MCF 10A (cell line): ENCODE measurements at regions of chr10 and their contacts with region 1.

Region 1: DNA sequence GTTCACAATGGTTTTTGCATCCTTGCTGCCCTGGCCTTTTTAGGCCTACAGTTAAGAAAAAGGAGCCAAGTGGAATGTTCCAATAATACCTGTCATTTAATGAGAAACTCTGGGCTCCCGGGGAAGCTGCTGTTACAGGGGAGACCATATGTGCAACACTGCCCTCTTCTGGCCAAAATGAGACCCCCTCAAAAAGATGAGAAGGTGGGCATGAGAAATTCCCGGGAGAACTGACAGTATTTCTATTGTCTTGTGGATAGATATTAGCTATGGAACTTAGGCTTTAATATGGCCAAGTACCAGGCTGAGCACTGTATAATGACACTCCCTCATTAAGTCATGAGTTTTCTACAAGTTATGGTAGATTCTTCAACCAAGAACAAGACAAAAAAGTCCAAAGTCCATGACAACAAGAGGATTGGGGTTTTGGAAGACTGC is 99.4 kb downstream of the CCDC3 start:
- DNase-seq: peak; percentile 77
- H3K4me3 Mint-ChIP-seq: no peak overlapping the region
- H3K27ac Mint-ChIP-seq: no peak overlapping the region
- H3K4me1 Mint-ChIP-seq: peaks cover 4% of the 10 kb centered on the region
- H3K27me3 Mint-ChIP-seq: no peaks in the 10 kb centered on the region
- CTCF ChIP-seq: peak; percentile 86

Region 2: DNA sequence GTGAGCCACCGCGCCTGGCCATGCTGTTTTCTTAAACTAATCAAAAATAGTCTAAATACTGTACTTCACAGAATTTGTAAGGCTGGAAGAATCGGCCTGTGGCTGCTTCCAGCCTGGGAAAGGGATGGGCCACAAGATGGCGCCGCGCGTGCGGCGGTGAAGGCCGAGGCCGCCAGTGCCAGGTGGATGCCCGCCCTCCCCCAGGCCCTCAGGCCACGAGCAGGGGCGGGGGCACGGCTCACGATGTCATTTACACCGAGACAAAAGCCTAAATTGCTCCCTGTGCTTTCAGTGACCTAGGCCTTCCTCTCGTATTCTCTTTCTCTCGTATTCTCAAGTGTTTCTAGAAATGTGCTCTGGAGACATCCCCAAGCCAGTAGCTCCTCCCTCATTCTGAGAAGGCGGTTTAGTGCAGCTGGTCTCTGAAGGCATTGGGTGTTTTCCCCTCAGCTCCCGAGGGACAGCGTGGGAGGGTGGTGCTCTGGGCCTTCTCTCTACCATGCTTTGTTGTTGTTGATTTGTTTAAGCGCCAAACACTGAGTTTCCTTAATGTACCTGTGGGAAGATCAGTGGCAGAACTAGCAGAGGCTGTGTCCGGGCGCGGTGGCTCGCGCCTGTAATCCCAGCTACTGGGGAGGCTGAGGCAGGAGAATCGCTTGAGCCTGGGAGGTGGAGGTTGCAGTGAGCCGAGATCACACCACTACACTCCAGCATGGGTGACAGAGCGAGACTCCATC is 637.8 kb before region 1 on chr10:
- CTCF ChIA-PET with region 1: interaction called, 6 read pairs
- POLR2A ChIA-PET with region 1: no interaction called
- intact Hi-C with region 1: loop called (anchors 1 kb)
- DNase-seq: peak; percentile 62
- H3K4me3 Mint-ChIP-seq: peak overlapping the region; percentile 62
- H3K27ac Mint-ChIP-seq: peak overlapping the region; percentile 40
- H3K4me1 Mint-ChIP-seq: peaks cover 8% of the 10 kb centered on the region
- H3K27me3 Mint-ChIP-seq: no peaks in the 10 kb centered on the region
- CTCF ChIP-seq: peak; percentile 90

Region 3: DNA sequence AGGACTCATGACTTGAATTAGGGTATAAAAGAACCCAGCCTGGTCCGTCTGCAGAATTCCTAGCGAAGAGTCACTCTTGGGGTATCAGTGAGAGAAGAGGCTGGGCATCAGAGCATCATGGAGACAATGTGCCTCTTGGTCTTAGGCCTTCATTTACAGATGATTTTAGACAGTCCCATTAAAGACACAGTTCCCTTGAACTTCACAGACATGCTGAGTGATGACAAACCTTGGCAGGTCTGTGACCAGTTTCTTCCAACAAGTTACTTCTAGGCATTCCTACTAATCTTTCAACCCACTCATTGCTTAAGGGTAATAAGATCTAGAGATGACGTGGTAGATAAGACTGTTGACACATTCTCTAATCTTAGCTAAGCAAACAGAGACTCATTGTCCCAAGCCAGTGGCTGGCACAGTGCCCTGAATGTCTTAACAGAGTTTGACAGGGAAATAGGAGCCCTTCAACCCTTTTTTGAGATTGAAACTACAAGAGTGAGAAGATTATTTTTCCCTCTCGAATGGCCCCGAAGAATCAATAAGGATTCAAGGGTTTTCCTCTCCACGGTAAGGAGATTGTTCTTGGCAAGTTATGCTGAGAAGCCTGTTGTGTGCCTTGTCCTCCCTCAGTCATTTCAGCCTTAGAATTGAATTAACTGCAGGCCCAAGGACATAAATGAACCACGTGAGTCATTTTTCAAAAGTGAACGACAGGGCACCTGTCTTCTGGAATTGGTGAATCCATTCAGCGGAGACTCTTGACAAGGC is 181.8 kb before region 1 on chr10:
- CTCF ChIA-PET with region 1: interaction called, 21 read pairs
- POLR2A ChIA-PET with region 1: interaction called, 8 read pairs
- intact Hi-C with region 1: loop called (anchors 1 kb)
- DNase-seq: peak; percentile 98
- H3K4me3 Mint-ChIP-seq: peak overlapping the region; percentile 43
- H3K27ac Mint-ChIP-seq: peak overlapping the region; percentile 79
- H3K4me1 Mint-ChIP-seq: peaks cover 26% of the 10 kb centered on the region
- H3K27me3 Mint-ChIP-seq: no peaks in the 10 kb centered on the region
- CTCF ChIP-seq: no peak

Region 4: DNA sequence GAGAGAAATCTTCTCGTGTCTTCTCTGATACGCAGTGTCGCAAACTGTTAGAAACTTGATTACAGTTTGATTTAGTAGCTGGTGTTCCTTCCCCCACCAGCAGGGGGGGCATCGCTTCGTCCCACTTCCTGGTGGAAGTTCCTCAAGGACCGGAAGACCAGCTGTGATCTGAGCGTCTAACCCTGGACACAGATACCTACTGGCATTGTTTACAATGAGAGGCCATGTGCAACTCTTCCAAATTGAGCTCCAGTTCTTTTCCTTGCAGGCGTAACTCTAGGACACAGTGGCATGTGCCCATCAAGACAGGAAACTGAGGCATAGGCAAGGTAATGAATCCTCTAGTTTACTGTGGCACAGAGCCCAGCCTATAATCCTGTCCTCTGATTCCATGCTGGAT is 119.6 kb before region 1 on chr10:
- CTCF ChIA-PET with region 1: interaction called, 16 read pairs
- POLR2A ChIA-PET with region 1: interaction called, 3 read pairs
- intact Hi-C with region 1: loop called (anchors 1 kb)
- DNase-seq: peak; percentile 56
- H3K4me3 Mint-ChIP-seq: no peak overlapping the region
- H3K27ac Mint-ChIP-seq: no peak overlapping the region
- H3K4me1 Mint-ChIP-seq: no peaks in the 10 kb centered on the region
- H3K27me3 Mint-ChIP-seq: no peaks in the 10 kb centered on the region
- CTCF ChIP-seq: peak; percentile 61

Region 5: GRCh38 chr10:12884380-12884779 is 17.8 kb before region 1 on chr10:
- CTCF ChIA-PET with region 1: interaction called, 14 read pairs
- POLR2A ChIA-PET with region 1: no interaction called
- intact Hi-C with region 1: no loop called
- DNase-seq: no peak
- H3K4me3 Mint-ChIP-seq: no peak overlapping the region
- H3K27ac Mint-ChIP-seq: no peak overlapping the region
- H3K4me1 Mint-ChIP-seq: no peaks in the 10 kb centered on the region
- H3K27me3 Mint-ChIP-seq: no peaks in the 10 kb centered on the region
- CTCF ChIP-seq: no peak

Region 6: DNA sequence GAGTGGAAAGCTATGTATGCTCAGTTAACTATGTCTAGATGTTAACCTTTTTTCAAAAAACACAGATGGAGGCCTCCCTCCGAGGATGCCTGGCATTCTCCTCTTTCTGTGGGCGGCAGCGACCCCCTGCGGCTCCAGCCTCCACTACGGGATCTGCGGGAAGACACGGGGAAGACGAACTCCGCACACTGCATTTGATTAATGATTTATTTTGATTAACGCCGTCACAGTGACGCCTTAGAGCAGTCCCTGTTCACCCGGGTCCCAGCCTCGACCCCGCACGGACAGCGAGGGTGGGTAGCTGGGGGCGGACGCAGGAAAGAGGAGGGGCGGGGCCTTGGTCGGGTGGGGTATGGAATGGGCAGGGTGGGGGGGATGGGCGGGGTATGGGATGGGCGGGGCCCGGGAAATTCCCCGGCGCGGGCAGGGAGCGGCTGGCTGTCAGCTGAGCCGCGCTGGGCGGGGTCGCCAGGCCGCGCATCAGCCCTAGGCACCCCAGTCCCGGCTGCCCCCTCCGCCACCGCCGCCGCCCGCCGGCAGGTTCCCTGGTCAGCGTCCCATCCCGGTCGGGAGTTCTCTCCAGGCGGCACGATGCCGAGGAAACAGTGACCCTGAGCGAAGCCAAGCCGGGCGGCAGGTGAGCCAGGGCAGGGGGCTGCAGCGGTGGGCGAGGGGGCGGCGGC is 197.7 kb after region 1 on chr10 and contains the start of gene OPTN:
- CTCF ChIA-PET with region 1: no interaction called
- POLR2A ChIA-PET with region 1: interaction called, 3 read pairs
- intact Hi-C with region 1: loop called (anchors 1 kb)
- DNase-seq: peak; percentile 81
- H3K4me3 Mint-ChIP-seq: peak within 1 kb of the TSS; percentile 83
- H3K27ac Mint-ChIP-seq: peak within 1 kb of the TSS; percentile 87
- H3K4me1 Mint-ChIP-seq: peaks cover 26% of the 10 kb centered on the region
- H3K27me3 Mint-ChIP-seq: no peaks in the 10 kb centered on the region
- CTCF ChIP-seq: peak; percentile 75
- total RNA-seq, gene OPTN: 79.6 and 109 TPM in 2 replicates